Activated CD8-positive, alpha-beta T cell treated with anti-CD3 and anti-CD28 coated beads, Interleukin-2, amount 10 ng/mL, durations not matched to agents 7 days and 5 days (primary cell): ENCODE measurements at regions of chr3 and their contacts with region 1.

Region 1: DNA sequence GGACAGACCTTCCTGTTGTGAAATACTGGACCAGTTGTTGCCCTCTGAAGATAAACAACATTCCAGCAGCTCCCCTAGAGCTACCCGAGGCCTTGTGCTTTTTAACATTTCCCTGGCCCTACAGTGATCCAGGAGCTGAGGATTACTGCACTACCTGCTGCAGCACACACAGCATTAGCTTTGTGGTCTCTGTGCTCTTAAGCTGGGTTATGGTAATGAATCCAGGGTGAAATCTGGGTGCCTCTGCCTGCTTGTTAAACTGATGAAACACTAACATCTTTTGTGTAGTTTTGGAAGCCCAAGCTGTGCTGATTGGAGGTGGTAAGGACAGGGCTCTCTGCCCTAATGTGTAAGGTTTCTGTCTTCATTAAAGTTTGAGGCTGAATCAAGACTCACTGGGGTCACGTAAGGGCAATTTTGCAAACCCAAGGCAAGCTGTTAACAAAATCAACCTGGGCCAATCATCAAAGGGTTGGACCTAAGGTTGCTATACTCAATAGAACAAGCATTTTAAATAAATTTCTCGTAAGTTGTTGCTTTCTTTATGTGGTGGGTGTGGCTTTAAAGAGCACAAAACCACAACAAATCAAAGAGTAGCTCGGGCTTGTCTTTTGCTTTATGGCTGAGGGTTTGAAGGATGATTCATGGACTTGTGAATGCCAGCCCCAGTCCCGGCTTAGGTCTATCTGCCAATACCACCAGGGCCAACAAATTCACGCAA is 183.9 kb downstream of the TPRG1 start:
- DNase-seq: peak; percentile 56
- ATAC-seq: peak; percentile 88
- H3K4me3 Mint-ChIP-seq: peak overlapping the region; percentile 55
- H3K27ac Mint-ChIP-seq: peak overlapping the region; percentile 82
- H3K4me1 Mint-ChIP-seq: peaks cover 20% of the 10 kb centered on the region
- H3K27me3 Mint-ChIP-seq: no peaks in the 10 kb centered on the region

Region 2: DNA sequence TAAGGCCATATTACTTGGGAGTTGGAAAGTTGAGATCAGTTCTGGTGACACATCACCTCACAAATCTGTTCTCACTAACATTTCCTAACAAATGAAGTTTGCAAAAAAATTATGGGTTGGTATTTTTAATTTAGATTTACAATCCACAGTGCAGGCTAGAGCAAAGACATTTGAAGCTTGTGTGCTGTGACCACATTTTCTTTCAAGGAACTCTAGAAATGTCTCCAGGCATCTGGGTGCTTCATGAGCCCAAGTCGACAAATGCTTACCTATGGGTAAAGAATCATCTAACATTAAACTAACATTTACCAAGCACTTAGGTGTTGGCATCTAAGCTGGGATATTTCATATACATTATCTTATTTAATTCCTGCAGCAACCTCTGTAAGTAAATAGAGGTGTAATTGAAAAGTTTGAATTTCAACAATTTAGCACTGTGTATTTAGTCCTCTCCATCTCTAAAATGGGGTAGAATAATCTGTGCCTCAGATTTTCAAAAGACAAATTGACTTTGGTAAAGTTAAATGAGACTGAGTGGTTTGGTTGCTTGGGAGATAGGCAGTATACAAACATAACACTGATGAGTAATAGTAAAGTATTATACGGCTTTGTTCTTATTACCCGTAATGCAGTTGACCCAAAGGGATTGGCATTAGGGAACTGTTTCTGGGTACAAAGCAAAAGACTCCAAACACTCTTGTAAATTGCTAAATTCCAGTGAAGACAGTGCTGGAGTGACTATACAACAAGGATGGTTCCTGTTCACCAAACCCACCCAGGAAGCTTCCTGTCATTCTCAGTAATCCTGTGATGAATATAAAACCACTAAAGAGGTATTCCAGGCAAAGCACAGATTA is 21.3 kb before region 1 on chr3:
- CTCF ChIA-PET with region 1: interaction called, 18 read pairs
- POLR2A ChIA-PET with region 1: interaction called, 5 read pairs
- DNase-seq: no peak
- ATAC-seq: peak; percentile 24
- H3K4me3 Mint-ChIP-seq: no peak overlapping the region
- H3K27ac Mint-ChIP-seq: no peak overlapping the region
- H3K4me1 Mint-ChIP-seq: peaks cover 47% of the 10 kb centered on the region
- H3K27me3 Mint-ChIP-seq: no peaks in the 10 kb centered on the region